Activated naive CD8-positive, alpha-beta T cell treated with anti-CD3 and anti-CD28 coated beads, Interleukin-2, amount 10 ng/mL, durations not matched to agents 7 days and 5 days (primary cell): ENCODE measurements at regions of chr3 and their contacts with region 1.

Region 1: GRCh38 chr3:101512646-101513418 is at the start of gene SENP7:
- DNase-seq: peak; percentile 77
- ATAC-seq: peak; percentile 69
- H3K4me3 Mint-ChIP-seq: peak within 1 kb of the TSS; percentile 99
- H3K27ac Mint-ChIP-seq: peak within 1 kb of the TSS; percentile 98
- H3K4me1 Mint-ChIP-seq: peaks cover 26% of the 10 kb centered on the region
- H3K27me3 Mint-ChIP-seq: no peaks in the 10 kb centered on the region
- total RNA-seq, gene SENP7: 42.5 to 47.6 TPM

Region 2: GRCh38 chr3:101561630-101562328 is 48.9 kb after region 1 on chr3 and contains the start of gene TRMT10C:
- POLR2A ChIA-PET with region 1: interaction called, 30 read pairs
- DNase-seq: peak; percentile 89
- ATAC-seq: peak; percentile 97
- H3K4me3 Mint-ChIP-seq: peak within 1 kb of the TSS; percentile 96
- H3K27ac Mint-ChIP-seq: peak within 1 kb of the TSS; percentile 97
- H3K4me1 Mint-ChIP-seq: peaks cover 26% of the 10 kb centered on the region
- H3K27me3 Mint-ChIP-seq: peaks cover 2% of the 10 kb centered on the region
- total RNA-seq, gene TRMT10C: 22.8 to 23.9 TPM